B cell (primary cell): ENCODE measurements at regions of chr4 and their contacts with region 1.

Region 1: DNA sequence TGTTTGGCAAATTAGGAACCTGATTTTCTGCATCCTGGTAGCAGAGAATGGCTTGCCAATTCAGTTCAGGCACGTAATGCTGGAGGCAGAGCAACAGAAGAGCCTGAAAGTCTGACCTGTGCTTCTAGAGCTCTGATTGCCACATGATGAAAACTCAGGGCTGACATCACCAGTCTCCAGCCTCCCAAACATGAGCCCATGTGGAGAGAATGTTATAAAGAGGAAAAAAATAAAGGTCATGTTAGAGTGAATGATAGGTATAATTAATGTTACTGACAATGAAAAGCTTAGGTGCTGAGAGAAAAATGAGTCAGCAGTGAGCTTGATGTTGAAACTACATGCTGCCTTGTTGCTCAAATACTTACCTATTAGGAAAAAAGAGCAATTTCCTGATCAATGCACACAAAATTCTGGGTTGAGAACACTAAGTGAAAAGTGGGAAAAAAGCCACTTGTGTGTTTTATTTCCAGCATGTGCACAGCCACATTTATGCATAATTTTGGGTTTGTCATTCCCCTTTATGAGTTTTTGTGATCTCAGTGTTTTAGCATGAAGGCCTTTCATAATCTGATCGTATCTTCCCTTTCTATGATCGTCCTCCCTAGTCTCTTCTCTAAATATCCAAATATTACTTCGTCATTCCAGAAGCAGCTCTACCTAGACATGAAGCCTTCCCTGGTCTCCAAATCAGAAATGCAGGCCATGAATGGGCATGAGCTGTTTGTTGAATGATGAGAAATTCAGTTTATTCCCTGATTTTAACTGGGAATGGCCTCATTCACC is 113.3 kb upstream of the CPEB2 start:
- DNase-seq: no peak
- ATAC-seq: no peak
- H3K4me3 ChIP-seq: no peak overlapping the region
- H3K4me3 Mint-ChIP-seq: no peak overlapping the region
- H3K27ac ChIP-seq: no peak overlapping the region
- H3K27ac Mint-ChIP-seq: no peak overlapping the region
- H3K4me1 ChIP-seq: no peaks in the 10 kb centered on the region
- H3K4me1 Mint-ChIP-seq: no peaks in the 10 kb centered on the region
- H3K27me3 ChIP-seq: no peaks in the 10 kb centered on the region
- H3K27me3 Mint-ChIP-seq: peaks cover 4% of the 10 kb centered on the region
- CTCF ChIP-seq: no peak

Region 2: GRCh38 chr4:13509442-13509841 is 1379.5 kb before region 1 on chr4:
- CTCF ChIA-PET with region 1: no interaction called
- POLR2A ChIA-PET with region 1: interaction called, 10 read pairs
- intact Hi-C with region 1: no loop called
- DNase-seq: no peak
- ATAC-seq: no peak
- H3K4me3 ChIP-seq: no peak overlapping the region
- H3K4me3 Mint-ChIP-seq: no peak overlapping the region
- H3K27ac ChIP-seq: no peak overlapping the region
- H3K27ac Mint-ChIP-seq: no peak overlapping the region
- H3K4me1 ChIP-seq: no peaks in the 10 kb centered on the region
- H3K4me1 Mint-ChIP-seq: no peaks in the 10 kb centered on the region
- H3K27me3 ChIP-seq: peaks cover 0 to 13% (median 6%) of the 10 kb centered on the region in 4 experiments
- H3K27me3 Mint-ChIP-seq: peaks cover 46% of the 10 kb centered on the region
- CTCF ChIP-seq: no peak

Region 3: GRCh38 chr4:14916554-14917297 is 27.7 kb after region 1 on chr4:
- CTCF ChIA-PET with region 1: no interaction called
- POLR2A ChIA-PET with region 1: no interaction called
- intact Hi-C with region 1: no loop called
- DNase-seq: no peak
- ATAC-seq: no peak
- H3K4me3 ChIP-seq: no peak overlapping the region
- H3K4me3 Mint-ChIP-seq: no peak overlapping the region
- H3K27ac ChIP-seq: no peak overlapping the region
- H3K27ac Mint-ChIP-seq: no peak overlapping the region
- H3K4me1 ChIP-seq: no peaks in the 10 kb centered on the region
- H3K4me1 Mint-ChIP-seq: no peaks in the 10 kb centered on the region
- H3K27me3 ChIP-seq: no peaks in the 10 kb centered on the region
- H3K27me3 Mint-ChIP-seq: peaks cover 3% of the 10 kb centered on the region
- CTCF ChIP-seq: no peak